ENCODE measurements at regions of chr17 and their contacts with region 1.

Region 1: GRCh38 chr17:8747742-8748141 is 3.1 kb upstream of the CCDC42 start:
- DNase-seq: no peak
- ATAC-seq: no peak
- H3K4me3 ChIP-seq: no peak overlapping the region
- H3K4me3 Mint-ChIP-seq: no peak overlapping the region
- H3K27ac ChIP-seq: no peak overlapping the region
- H3K27ac Mint-ChIP-seq: peak overlapping the region in 1 of 2 donors; percentile 25
- H3K4me1 ChIP-seq: peaks cover 0 to 20% of the 10 kb centered on the region in 2 experiments
- H3K4me1 Mint-ChIP-seq: peaks cover 7 to 26% (median 22%) of the 10 kb centered on the region in 3 donors
- H3K27me3 ChIP-seq: peaks cover 0 to 3% of the 10 kb centered on the region in 2 experiments
- H3K27me3 Mint-ChIP-seq: no peaks in the 10 kb centered on the region

Region 2: DNA sequence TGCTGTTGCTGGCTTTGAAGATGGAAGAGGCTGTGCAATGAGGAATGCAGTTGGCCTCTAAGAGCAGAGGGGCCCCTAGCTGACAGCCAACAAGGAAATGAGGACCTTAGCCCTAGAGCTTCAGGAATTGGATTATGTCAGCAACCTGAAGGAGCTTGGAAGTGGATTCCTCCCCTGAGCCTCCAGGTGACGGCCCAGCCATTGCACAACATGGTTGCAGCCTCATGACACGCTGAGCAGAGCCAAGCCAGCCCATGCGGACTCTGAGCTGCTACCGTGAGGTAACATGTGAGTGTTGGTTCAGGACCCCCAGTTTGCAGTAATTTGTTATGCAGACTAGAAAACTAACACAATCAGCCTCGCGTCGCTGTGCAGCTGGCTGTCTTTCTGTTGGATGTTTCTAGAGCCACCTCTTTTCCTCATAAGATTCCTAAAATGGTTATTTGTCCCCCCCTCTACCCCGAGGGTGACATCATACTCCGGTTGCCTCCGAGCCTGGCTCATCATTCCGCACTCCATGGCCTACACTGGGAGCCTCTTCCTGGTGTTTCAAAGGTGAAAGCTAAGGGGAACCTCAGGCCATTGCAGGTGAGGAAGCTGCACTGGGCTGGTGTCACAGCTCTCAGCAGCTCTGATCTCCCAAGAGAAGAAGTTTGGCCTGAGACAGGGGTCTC is 23.2 kb before region 1 on chr17:
- CTCF ChIA-PET with region 1: no interaction called
- POLR2A ChIA-PET with region 1: no interaction called
- DNase-seq: no peak
- ATAC-seq: no peak
- H3K4me3 ChIP-seq: no peak overlapping the region
- H3K4me3 Mint-ChIP-seq: no peak overlapping the region
- H3K27ac ChIP-seq: no peak overlapping the region
- H3K27ac Mint-ChIP-seq: no peak overlapping the region
- H3K4me1 ChIP-seq: no peaks in the 10 kb centered on the region
- H3K4me1 Mint-ChIP-seq: no peaks in the 10 kb centered on the region
- H3K27me3 ChIP-seq: peaks cover 0 to 20% of the 10 kb centered on the region in 2 experiments
- H3K27me3 Mint-ChIP-seq: peaks cover 5 to 9% of the 10 kb centered on the region in 2 donors

Region 3: GRCh38 chr17:9028202-9028987 is 280.7 kb after region 1 on chr17:
- CTCF ChIA-PET with region 1: no interaction called
- POLR2A ChIA-PET with region 1: no interaction called
- DNase-seq: no peak
- ATAC-seq: no peak
- H3K4me3 ChIP-seq: no peak overlapping the region
- H3K4me3 Mint-ChIP-seq: no peak overlapping the region
- H3K27ac ChIP-seq: no peak overlapping the region
- H3K27ac Mint-ChIP-seq: no peak overlapping the region
- H3K4me1 ChIP-seq: peaks cover 1 to 3% of the 10 kb centered on the region in 2 experiments
- H3K4me1 Mint-ChIP-seq: peaks cover 2 to 14% (median 9%) of the 10 kb centered on the region in 3 donors
- H3K27me3 ChIP-seq: peaks cover 13 to 38% of the 10 kb centered on the region in 2 experiments
- H3K27me3 Mint-ChIP-seq: peaks cover 58 to 84% of the 10 kb centered on the region in 2 donors

Region 4: GRCh38 chr17:9090641-9091096 is 342.9 kb after region 1 on chr17:
- CTCF ChIA-PET with region 1: interaction called in 1 of 2 experiments, 11 read pairs
- POLR2A ChIA-PET with region 1: no interaction called
- DNase-seq: no peak
- ATAC-seq: no peak
- H3K4me3 ChIP-seq: no peak overlapping the region
- H3K4me3 Mint-ChIP-seq: no peak overlapping the region
- H3K27ac ChIP-seq: no peak overlapping the region
- H3K27ac Mint-ChIP-seq: no peak overlapping the region
- H3K4me1 ChIP-seq: no peaks in the 10 kb centered on the region
- H3K4me1 Mint-ChIP-seq: no peaks in the 10 kb centered on the region
- H3K27me3 ChIP-seq: peaks cover 0 to 22% of the 10 kb centered on the region in 2 experiments
- H3K27me3 Mint-ChIP-seq: peaks cover 10 to 16% of the 10 kb centered on the region in 2 donors